Right ventricle myocardium inferior (tissue), 1 donor: ENCODE measurements at regions of chrX and their contacts with region 1.

Region 1: DNA sequence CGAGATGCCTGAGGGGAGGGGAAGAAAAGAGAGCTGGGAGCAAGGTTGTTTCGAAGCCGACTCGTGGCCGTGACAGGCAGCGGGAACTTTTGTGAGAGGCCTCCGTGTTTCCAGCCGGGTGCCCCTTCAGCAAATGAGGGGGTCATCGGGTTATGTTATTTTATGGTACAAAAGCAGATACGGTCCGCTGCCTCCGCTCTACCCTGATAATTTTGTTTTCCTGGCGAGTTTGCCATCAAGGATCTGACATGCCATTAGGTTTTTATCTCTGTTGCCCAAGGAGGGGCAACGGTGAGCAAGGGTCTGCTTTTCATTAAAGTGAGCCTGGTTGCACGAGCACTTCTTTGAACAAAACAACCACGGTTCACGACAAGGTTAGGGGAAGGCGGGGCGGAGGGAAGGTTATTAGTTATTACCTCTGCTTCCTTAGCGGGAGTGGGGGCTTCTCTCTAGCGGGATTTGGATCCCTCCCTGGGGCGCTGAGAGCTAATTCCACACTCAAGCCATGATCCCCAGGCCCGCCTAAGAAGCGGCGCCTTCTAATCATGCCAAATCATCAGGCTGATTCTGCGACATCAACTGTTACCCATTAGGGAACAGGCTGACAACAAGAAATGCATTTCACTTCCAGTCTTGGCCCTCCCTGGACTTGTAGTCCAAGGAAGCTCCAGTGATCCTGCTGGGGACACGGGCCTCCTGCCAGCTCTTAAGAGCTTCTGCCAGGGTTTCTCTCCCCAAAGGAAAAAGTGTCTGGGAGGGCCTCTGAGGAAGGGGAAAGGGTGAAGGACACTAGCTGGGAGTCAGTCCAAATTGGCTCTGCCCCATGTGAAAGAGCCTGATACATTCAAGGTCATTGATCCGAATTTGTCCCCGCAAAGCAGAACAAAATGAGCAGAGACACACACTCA is 617.7 kb downstream of the MID1IP1 start:
- DNase-seq: no peak
- ATAC-seq: peak; percentile 72

Region 2: GRCh38 chrX:39222346-39223113 is 196.5 kb before region 1 on chrX:
- intact Hi-C with region 1: no loop called
- DNase-seq: no peak
- ATAC-seq: no peak

Region 3: DNA sequence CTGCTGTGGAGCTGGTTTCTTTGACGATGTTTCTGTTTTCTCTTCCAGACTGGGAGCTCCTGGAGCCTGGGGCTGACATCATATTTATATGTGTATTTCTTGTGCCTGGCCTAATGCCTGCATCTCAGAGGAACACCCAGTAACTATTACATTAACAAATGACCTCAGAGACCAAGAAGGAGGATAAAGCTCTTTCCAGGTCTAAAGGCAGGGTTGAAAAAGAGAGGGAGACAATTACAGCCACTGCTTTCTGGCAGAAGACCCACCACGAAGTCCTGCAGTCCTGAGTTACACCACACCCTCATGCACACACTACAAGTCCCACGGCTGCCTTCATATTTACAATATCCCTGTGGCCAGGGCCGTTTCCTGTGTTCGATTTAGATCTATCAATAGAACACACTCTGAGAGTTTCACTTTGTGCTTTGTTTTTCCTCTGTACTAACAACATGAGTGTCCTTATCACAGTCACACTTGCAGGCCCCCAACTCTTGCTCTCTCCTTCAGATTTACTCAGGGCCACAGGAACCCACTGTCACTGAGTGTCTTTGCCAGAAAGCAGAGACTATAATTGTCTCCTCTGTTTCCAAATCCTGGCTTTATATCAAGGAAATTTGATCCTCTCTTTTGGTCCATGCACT is 82.2 kb before region 1 on chrX:
- intact Hi-C with region 1: loop called (anchors 5 kb)
- DNase-seq: no peak
- ATAC-seq: peak; percentile 90

Region 4: GRCh38 chrX:39559229-39559628 is 140.2 kb after region 1 on chrX:
- intact Hi-C with region 1: no loop called
- DNase-seq: no peak
- ATAC-seq: no peak